Psoas muscle (tissue), 8 donors: ENCODE measurements at regions of chr3 and their contacts with region 1.

Region 1: DNA sequence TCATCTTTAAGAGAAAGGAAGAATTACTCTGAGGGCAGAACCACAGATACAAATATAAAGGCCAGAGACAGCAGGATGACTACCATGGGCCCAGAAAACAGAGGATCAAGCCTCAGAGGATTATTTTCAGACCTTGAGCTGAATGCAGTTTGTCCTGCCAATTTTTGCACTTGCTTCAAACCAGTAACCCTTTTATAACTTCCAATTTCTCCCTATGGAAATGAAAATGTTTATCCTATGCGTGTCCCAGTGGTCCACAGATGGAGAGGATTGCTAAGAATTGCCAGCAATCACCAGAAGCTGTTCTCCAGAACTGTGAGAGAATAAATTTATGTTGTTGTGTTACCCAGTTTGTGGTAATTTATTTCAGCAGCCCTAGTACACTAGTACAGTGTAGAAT is 26.4 kb upstream of the MME start:
- DNase-seq: no peak
- ATAC-seq: no peak
- H3K4me3 ChIP-seq: no peak overlapping the region
- H3K27ac ChIP-seq: no peak overlapping the region
- H3K4me1 ChIP-seq: no peaks in the 10 kb centered on the region
- H3K27me3 ChIP-seq: no peaks in the 10 kb centered on the region
- CTCF ChIP-seq: no peak

Region 2: DNA sequence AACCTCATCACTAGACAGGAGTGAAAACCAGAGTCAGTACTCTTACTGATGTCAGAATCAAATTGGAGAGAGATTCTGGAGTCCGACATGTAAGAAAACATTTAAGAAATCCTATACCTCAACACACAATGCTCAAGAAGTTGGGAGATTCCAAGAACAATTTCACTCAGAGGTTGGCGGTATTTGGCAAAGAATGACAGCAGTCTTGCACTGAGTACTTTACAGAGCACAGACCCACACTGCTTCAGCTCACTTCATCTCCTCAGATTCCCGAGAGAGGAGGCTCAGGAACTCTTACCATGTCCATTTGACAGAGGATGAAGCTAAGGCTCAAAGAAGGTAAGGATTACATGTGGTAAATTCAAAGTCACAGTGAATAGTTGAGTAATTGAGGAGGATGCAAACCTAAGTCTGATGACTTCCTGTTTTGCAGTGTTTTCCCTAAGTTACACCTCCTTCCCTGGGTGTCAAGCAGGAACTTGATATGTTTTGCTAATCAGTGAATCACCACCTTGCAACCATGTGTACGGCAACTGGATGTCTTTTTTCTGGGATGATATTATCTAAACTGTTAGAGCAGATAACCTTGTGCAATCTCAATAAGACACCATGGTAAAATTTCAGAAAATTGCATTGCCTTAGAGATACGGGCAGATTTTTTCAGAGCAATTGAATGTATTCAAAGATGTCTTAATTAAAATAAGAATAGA is 35.0 kb before region 1 on chr3:
- intact Hi-C with region 1: loop called in 1 of 2 experiments (anchors 5 kb)
- DNase-seq: no peak
- ATAC-seq: no peak
- H3K4me3 ChIP-seq: no peak overlapping the region
- H3K27ac ChIP-seq: no peak overlapping the region
- H3K4me1 ChIP-seq: no peaks in the 10 kb centered on the region
- H3K27me3 ChIP-seq: no peaks in the 10 kb centered on the region
- CTCF ChIP-seq: no peak